GM13977 (cell line): ENCODE measurements at regions of chr4 and their contacts with region 1.

Region 1: DNA sequence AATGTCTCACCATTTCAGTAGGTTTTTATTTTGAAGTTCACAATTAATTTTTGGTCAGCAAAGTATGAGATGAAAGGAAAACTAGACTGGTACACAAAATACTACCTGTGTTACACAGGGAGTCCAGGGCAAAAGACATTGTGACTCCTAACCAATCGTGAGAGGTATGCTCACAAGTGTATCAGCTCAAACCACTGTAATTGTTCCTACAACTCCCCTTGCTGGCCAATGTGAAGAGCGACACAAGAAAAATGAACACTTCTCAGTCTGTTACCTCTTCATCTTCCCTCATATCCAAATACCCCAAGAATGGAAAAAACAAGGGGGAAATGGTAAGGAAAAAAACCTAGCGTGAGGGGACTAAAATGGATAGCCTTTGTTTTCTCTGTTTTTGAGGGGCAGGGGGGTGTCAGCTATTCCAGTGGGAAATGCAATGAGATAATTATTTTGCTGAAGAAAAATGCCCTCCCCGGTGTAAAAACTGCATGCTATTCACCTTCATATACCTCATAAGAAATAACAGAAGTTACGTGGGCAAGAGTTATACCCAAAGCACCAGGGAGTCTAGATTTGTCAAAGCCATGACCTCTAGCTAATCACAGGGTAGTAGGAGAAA is 30.6 kb upstream of the NSUN7 start:
- DNase-seq: peak; percentile 66
- CTCF ChIP-seq: peak; percentile 86

Region 2: DNA sequence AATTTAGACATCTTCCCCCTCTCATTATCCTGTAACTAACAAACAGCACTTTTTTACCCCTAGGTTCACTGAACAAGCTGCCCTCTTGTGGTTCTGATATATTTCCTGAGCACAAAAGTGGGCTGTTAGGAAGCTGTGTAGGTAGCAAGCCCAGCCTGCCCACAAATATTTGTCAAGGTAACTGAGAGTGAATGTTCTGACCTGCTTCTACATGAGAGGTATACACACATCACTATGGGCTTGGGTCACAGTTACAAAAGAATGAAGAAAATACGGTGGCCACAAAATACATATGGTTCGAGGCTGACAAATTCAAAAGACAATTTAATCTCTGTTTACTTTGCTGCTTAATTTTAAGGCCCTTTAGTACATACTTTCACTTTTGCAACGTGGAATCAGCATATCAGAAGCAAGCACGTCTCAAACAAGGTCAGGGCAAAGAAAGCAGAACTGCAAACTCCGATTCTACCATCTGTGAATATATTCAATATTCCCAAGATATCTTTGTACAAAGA is 168.1 kb before region 1 on chr4:
- in situ Hi-C with region 1: loop called (anchors 25 kb)
- DNase-seq: peak; percentile 52
- CTCF ChIP-seq: peak; percentile 54